ENCODE measurements at regions of chr16 and their contacts with region 1.

Region 1: DNA sequence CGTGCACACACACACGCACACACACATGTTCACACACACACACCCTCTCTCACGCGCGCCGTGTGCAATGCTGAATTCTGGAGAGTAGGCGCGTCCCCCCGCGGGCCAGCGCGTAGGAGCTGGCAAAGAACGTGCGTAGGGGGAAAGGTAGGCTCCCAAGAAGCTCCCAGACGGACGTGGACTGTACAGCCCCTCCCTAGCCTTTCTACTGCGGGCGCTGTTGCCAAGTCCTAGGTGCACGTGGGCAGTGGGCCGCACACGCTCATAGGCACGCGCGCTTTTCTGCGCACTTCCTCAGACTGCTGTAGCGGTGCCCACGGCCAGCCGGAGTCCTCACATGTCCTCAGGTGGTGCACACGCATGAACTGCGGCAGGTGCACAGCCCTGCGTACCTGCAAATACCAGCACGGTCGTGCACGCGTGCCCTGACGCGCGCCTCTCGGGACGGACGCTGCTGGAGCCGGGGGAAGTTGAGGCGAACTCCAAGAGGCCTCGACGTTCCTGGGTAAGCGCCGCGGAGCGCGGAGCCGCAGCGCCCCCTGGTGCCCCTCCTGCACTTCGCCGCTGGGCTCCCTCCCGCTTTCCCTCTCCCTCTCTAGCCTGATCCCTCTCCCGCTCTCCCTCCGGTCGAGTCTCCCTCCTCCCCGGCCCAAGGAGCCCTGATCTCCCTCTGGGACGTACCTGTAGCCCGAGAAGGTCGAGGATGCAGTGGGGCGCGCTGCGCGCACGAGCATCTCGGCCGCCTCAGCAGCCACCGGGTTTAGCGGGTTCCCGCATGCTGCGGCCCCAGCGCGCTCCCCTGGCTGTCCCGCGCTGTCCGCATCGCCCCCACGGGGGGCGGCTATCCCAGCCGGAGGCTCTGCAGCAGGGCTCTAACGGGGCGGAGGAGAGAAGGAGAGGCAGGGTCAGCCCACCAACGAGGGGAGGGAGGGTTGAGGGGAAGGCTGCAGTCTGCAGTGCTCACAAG is 749 bp downstream of the GRIN2A start:
- DNase-seq: peak; percentile 64 to 87 (median 85)
- ATAC-seq: peak; percentile 90 to 94
- H3K4me3 ChIP-seq: no peak overlapping the region
- H3K27ac ChIP-seq: no peak overlapping the region
- H3K4me1 ChIP-seq: no peaks in the 10 kb centered on the region
- H3K27me3 ChIP-seq: no peaks in the 10 kb centered on the region

Region 2: GRCh38 chr16:9159839-9160550 is 1021.5 kb before region 1 on chr16:
- intact Hi-C with region 1: loop called in 1 of 4 experiments (anchors 10 kb)
- DNase-seq: no peak
- ATAC-seq: peak; percentile 59 to 63
- H3K4me3 ChIP-seq: no peak overlapping the region
- H3K27ac ChIP-seq: no peak overlapping the region
- H3K4me1 ChIP-seq: no peaks in the 10 kb centered on the region
- H3K27me3 ChIP-seq: no peaks in the 10 kb centered on the region

Region 3: GRCh38 chr16:9260666-9261065 is 920.8 kb before region 1 on chr16:
- intact Hi-C with region 1: loop called in 1 of 4 experiments (anchors 5 kb)
- DNase-seq: no peak
- ATAC-seq: no peak
- H3K4me3 ChIP-seq: no peak overlapping the region
- H3K27ac ChIP-seq: no peak overlapping the region
- H3K4me1 ChIP-seq: no peaks in the 10 kb centered on the region
- H3K27me3 ChIP-seq: no peaks in the 10 kb centered on the region

Region 4: GRCh38 chr16:9647981-9648712 is 533.3 kb before region 1 on chr16:
- intact Hi-C with region 1: loop called in 3 of 4 experiments (anchors 2 to 10 kb)
- DNase-seq: no peak
- ATAC-seq: peak; percentile 80 to 85
- H3K4me3 ChIP-seq: no peak overlapping the region
- H3K27ac ChIP-seq: no peak overlapping the region
- H3K4me1 ChIP-seq: peaks cover 3% of the 10 kb centered on the region
- H3K27me3 ChIP-seq: no peaks in the 10 kb centered on the region

Region 5: DNA sequence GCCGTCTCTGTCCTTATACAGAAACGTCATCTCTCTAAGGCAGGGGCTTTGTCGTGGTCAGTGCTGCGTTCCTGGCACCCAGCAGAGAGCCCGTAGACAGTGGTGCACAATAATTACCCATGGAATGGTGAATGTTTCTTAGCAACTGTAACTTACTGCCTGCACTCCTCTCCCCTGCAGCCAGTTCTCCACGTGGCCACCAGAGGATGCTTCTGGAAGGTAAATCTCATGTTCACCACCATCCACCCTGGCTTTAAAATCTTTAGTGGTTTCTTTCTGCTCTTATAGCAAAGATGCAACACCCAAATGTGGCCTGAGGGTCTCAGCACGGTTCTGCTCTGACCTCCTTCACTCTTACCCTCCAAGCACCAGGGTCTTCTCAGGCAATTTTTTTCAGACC is 150.0 kb before region 1 on chr16:
- intact Hi-C with region 1: loop called in 3 of 4 experiments (anchors 5 to 10 kb)
- DNase-seq: no peak
- ATAC-seq: no peak
- H3K4me3 ChIP-seq: no peak overlapping the region
- H3K27ac ChIP-seq: no peak overlapping the region
- H3K4me1 ChIP-seq: no peaks in the 10 kb centered on the region
- H3K27me3 ChIP-seq: no peaks in the 10 kb centered on the region

Region 6: DNA sequence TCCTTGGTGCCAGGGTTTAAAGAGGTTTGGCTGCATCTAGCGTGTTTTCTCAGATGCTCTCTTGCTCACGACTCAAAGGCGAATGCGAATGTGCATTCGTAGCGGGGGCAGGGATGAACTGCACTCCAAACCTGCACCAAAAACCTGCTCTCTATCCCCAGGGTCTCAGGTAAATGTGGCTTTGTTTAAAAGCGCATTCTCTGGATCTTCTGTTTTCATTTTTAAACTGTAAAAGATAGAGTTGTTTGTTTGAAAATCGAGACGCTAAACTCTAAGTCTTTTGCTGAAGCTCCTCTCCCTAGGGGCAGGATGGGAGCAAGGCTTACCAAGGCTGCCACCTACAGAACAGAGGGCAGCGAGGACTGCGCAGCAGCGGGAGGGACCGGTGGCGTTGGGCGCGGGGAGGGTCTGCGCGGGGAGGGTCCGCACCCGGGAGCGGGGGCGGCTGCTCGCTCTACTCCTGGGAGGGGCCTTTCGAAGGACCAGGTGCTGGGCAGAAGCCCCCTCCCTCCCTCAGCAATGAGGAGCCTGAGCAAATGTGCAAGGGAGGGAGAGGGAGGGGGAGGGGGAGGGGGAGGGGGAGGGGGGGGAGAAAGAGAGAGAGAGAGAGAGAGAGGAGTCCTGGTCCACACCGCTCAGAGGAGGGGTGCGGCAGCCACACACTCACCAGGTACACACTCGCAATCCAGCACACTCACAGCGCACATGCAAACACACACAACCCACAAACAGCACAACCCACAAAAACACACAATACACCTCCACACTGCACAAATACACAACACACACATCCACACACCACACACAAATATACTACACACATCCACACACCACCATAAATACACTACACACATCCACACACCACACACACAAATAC is 142.0 kb before region 1 on chr16:
- intact Hi-C with region 1: loop called in 3 of 4 experiments (anchors 5 to 10 kb)
- DNase-seq: peak in 2 of 3 donors; percentile 57 to 66
- ATAC-seq: peak; percentile 67 to 76
- H3K4me3 ChIP-seq: peak overlapping the region; percentile 1
- H3K27ac ChIP-seq: no peak overlapping the region
- H3K4me1 ChIP-seq: no peaks in the 10 kb centered on the region
- H3K27me3 ChIP-seq: no peaks in the 10 kb centered on the region

Region 7: GRCh38 chr16:10266809-10267208 is 85.3 kb after region 1 on chr16:
- intact Hi-C with region 1: no loop called
- DNase-seq: no peak
- ATAC-seq: no peak
- H3K4me3 ChIP-seq: no peak overlapping the region
- H3K27ac ChIP-seq: no peak overlapping the region
- H3K4me1 ChIP-seq: no peaks in the 10 kb centered on the region
- H3K27me3 ChIP-seq: no peaks in the 10 kb centered on the region

Measured in right cardiac atrium (tissue), 5 donors.